Activated T-helper 1 cell treated with anti-CD3 and anti-CD28 coated beads, Interleukin-12 subunit alpha, Interleukin-12 subunit beta, Interleukin-2, Interleukin-4 antibody, amounts not matched to agents 30 ng/mL and 10 ng/mL and 1 ng/mL, durations not matched to agents 14 hours and 24 hours and 36 hours (primary cell): ENCODE measurements at regions of chr12 and their contacts with region 1.

Region 1: DNA sequence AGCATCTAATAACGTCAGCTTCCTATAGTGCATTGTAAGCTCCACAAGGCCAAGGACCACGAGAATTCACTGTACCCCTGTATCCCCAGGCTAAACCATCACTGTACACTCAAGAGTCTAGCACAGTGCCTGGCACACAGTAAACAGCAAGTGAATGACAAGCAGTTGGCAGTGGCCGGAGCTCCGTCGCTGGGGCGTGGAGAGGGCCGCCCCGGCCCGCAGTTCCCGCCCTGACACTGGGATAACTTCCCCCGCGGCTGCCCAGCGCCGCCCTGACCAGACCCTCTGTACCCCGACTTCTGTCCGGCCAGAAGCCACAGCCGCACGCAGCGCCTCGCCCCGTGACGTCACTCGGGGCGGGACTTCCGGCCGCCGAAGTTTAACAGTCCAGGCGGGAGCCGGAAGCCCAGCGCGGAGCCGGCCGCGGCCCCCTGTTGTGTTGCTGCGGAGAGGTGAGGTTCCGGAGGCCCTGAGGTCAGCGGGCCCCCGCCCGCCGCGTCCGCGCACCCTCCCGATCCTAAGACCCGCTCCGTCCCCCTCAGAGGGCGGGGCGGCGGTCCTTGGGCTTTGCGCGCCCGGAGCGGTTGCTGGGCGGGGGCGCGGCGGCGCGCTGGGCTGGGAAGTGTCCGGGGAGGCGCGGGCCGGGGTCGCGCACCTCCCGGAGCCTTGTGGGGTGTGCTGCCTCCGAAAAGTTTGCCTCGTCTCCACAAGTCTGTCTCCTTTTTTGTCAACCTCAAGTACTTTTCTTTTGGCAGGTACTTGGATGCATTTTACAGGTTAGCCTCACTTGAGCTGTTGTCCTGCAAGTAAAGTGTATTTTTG is at the start of gene NEDD1:
- DNase-seq: peak; percentile 83
- H3K4me3 Mint-ChIP-seq: peak within 1 kb of the TSS; percentile 88
- H3K27ac Mint-ChIP-seq: peak within 1 kb of the TSS; percentile 97
- H3K4me1 Mint-ChIP-seq: peaks cover 51% of the 10 kb centered on the region
- H3K27me3 Mint-ChIP-seq: peaks cover 3% of the 10 kb centered on the region
- total RNA-seq, gene NEDD1: 61.1 and 65.3 TPM in 2 replicates

Region 2: DNA sequence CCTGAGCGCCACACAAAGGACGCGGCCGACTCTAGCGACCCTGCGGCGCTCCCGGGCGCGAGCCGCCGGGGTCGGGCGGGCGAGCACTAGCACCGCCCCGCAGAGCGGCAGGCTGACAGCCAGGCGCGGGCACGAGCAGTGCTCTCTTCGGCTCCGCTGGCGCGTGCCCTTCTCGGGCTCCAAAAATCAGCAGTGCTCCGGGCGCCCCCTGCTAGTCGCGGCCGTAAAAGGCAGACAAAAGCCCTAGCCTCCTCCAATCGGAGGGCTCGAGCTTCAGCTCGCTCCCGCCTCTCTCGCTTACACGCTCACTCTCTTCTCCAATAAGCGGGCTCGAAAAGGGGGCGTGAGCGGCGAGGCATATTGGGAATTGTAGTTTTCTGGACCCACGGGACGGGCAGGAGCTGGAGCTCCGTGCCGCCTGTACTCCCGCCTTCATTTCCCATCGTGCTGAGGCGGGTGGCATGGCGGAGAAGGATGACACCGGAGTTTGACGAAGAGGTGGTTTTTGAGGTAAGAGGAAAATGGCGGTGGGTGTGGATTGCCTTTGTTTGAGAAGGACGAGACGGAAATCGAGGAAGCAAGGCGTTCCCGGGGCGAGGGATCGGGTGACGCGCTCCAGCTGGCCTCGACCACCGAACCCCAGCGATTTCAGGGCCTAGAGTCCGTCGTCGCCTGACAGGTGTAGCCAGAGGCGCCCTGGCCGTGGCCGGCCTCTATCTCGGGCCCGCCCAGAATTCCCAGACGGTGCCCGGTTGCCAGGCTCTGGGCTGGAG is 1689.5 kb before region 1 on chr12 and contains the starts of genes FGD6 and VEZT:
- intact Hi-C with region 1: loop called (anchors 5 kb)
- DNase-seq: peak; percentile 98
- H3K4me3 Mint-ChIP-seq: peak within 1 kb of the TSS; percentile 97
- H3K27ac Mint-ChIP-seq: peak within 1 kb of the TSS; percentile 98
- H3K4me1 Mint-ChIP-seq: peaks cover 37% of the 10 kb centered on the region
- H3K27me3 Mint-ChIP-seq: peaks cover 9% of the 10 kb centered on the region
- total RNA-seq, gene FGD6: 0.64 and 0.86 TPM in 2 replicates
- total RNA-seq, gene VEZT: 58.1 and 64.7 TPM in 2 replicates

Region 3: DNA sequence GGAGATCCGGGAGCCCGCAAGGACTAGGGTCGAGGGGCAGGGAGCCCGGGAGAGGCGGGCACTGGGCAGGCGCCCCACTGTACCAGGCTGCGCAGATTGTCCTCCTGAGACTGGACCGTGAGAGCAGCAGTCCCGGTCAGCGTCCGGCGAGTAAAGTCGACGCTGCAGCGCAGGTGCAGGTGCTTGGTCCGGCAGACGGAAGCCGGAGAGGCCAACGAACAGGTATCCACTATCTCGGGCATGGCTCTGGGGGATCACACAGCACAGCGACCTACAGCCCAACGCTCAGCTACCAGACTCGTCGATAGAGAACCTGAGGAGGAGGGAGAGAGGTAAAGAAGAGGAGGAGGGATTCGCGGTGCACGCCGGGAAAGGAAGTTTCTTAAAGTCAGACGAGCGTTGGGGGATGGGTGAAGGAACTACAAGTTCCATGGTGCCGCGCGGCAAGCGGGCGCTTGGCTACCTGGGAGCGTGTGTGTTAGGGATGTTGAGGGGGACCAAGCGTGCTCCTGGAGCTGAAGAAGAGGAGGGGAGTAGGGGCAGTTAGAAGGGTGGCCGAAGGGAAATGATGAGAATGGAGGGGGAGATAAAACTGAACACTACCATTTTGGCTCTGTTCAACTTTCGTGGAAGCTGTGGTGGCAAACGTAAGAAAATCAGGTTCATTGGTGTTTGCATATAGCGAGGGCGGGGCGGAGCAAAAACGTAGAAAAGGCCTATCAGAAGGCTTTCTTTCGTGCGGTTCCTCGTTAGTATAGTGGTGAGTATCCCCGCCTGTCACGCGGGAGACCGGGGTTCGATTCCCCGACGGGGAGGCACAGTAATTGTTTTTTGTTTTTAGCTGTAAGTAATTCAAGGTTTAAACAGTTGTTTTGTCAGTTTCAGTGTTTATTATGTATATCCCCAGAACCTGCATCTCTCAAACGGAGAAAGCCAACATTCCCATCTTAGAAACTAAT is 871.5 kb before region 1 on chr12 and contains the start of gene LTA4H:
- intact Hi-C with region 1: loop called (anchors 2 kb)
- DNase-seq: peak; percentile 93
- H3K4me3 Mint-ChIP-seq: no peak within 1 kb of the TSS
- H3K27ac Mint-ChIP-seq: no peak within 1 kb of the TSS
- H3K4me1 Mint-ChIP-seq: peaks cover 10% of the 10 kb centered on the region
- H3K27me3 Mint-ChIP-seq: no peaks in the 10 kb centered on the region
- total RNA-seq, gene LTA4H: 57.3 and 59.6 TPM in 2 replicates

Region 4: DNA sequence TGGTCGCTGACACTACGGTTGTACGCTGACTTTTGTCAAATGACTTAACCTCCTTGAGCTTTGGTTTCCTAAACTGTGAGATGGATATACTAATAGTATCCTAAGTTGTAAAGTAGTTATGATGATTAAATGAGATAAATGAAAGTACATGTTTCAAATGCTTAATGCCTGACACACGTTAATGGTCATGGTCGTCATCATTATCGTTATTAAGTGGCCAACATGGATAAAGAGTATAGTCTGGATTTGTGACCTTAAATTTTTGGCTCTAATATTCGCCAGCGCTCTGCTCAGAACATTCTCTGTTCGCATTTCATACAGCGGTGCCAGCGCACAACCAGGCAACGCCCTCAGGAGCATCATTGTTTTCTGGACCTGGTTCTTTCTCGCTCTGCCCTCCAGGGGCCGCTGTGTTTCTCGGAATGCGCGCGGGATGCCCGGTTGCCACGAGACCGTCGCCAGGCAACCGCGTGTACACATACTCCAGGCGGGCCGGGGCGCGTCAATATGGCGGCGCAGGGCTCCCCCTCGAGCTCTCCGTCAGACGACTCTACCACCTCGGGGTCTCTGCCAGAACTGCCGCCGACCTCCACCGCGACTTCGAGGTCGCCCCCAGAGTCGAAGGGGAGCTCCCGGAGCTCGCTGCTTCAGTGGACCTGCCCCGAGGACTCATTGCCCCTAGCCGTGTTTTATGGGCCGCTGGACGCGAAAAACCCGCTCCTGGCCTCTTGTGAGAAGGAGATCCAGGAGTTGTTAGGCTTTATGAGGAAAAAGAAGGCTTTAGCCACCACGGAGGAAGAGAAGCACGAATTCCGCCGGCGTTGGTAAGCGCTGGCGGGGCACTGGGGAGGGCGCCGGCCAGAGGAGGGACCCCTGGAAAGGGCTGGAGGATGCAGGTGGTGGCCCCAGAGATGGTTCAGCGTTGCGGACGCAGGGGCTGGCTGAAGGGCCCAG is 417.7 kb before region 1 on chr12 and contains the start of gene CFAP54:
- intact Hi-C with region 1: loop called (anchors 5 kb)
- DNase-seq: peak; percentile 92
- H3K4me3 Mint-ChIP-seq: peak within 1 kb of the TSS; percentile 86
- H3K27ac Mint-ChIP-seq: peak within 1 kb of the TSS; percentile 85
- H3K4me1 Mint-ChIP-seq: peaks cover 43% of the 10 kb centered on the region
- H3K27me3 Mint-ChIP-seq: peaks cover 25% of the 10 kb centered on the region
- total RNA-seq, gene CFAP54: 0.17 and 0.34 TPM in 2 replicates

Region 5: DNA sequence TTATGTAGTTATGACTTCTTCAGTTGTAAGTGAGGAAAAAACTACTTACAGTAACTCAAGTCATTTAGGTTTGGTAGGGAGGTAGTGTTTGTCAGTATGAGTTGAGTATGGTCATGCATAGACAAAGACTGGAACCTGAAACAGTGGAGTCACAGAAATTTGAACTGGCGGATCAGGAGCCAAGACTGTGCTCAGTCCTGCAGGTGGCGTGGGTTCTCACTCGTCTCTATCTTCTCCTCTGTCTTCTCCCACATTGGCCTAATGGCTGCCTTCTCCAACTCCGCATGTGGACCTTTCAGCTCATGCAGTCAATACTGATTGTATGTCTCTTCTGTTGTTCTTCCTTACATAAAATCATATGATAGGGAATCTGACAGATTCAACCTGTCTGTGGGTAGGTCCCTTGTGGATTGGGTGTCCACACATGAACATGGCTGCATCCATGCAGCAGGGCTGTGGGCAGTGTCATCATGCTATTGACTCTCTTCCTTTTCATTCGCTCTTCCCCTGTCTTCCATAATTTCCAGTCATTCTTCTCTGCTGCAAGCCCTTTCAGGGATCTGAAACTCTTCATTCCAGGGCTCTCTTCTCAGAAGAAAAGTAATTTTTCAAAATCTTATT is 78.8 kb before region 1 on chr12:
- intact Hi-C with region 1: loop called (anchors 5 kb)
- DNase-seq: no peak
- H3K4me3 Mint-ChIP-seq: no peak overlapping the region
- H3K27ac Mint-ChIP-seq: no peak overlapping the region
- H3K4me1 Mint-ChIP-seq: no peaks in the 10 kb centered on the region
- H3K27me3 Mint-ChIP-seq: no peaks in the 10 kb centered on the region

Region 6: DNA sequence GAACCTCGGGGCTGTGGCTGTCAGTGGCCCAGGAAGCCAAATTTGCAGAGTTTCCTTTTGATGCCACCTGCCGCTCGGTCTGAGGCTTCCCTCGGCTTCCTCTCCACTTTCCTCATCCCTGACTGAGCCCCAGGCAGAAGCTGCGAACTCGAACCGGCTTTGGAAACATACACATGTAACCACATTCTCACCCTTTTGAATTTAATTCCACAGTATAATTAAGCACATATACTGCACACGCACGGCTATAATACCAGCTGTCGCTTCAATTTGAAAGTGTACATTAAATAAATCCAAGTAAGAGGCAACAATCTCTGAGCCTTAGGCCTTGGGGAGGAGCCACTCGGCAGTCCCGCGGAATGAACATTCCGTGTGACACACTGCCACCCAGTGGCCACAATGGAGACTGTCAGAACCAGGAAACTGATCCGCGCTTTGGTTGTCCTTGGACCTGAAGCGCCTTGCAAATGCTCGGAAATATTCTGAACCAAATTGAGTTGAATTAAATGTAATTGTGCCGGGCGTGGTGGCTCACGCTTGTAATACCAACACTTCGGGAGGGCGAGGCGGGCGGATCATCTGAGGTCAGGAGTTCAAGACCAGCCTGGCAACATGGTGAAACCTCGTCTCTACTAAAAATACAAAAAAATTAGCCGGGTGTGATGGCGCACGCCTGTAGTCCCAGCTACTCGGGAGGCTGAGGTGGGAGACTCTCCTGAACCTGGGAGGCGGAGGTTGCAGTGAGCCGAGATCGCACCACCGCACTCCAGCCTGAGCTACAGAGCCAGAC is 1490.5 kb after region 1 on chr12:
- intact Hi-C with region 1: loop called (anchors 5 kb)
- DNase-seq: peak; percentile 76
- H3K4me3 Mint-ChIP-seq: peak overlapping the region; percentile 77
- H3K27ac Mint-ChIP-seq: peak overlapping the region; percentile 53
- H3K4me1 Mint-ChIP-seq: peaks cover 38% of the 10 kb centered on the region
- H3K27me3 Mint-ChIP-seq: no peaks in the 10 kb centered on the region

Region 7: DNA sequence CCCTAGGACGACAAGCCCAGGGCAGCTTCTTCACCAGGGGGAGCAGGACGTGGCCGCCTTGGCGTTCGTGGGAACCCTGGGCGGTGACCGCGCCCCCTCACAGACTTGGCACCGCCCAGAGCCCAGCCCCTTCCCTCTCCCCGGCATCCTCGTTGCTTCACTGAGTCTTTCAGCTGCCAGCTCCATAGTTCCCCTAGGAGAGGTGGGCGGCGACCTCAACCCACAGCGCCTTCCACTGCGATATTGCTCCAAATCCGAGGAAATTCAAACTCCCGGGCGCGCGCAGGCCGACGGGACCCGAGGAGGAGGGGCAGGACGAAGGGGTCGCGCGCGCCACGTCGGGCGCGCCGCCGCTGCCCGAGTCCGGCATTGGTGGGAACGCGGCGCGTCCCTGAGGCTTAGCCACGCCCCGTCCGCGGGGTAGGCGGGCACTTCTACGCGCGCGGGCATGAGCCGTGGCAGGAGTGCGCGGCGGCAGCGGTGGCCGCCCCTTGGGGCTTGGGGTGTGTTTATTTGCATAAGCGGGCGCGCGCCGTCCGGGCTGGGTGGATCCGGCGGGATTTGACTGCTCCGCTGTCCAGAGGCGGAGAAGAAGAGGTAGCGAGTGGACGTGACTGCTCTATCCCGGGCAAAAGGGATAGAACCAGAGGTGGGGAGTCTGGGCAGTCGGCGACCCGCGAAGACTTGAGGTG is 1737.8 kb after region 1 on chr12 and contains the starts of genes APAF1 and IKBIP:
- intact Hi-C with region 1: loop called (anchors 5 kb)
- DNase-seq: peak; percentile 96
- H3K4me3 Mint-ChIP-seq: peak within 1 kb of the TSS; percentile 92
- H3K27ac Mint-ChIP-seq: peak within 1 kb of the TSS; percentile 95
- H3K4me1 Mint-ChIP-seq: peaks cover 49% of the 10 kb centered on the region
- H3K27me3 Mint-ChIP-seq: no peaks in the 10 kb centered on the region
- total RNA-seq, gene APAF1: 21.2 and 23.9 TPM in 2 replicates
- total RNA-seq, gene IKBIP: 35.5 and 36.5 TPM in 2 replicates